Posterior cingulate gyrus (tissue), 11 donors: ENCODE measurements at regions of chr22 and their contacts with region 1.

Region 1: GRCh38 chr22:39520054-39520891 is at the start of gene ATF4:
- DNase-seq: peak; percentile 88 to 98 (median 94)

Region 2: GRCh38 chr22:39152511-39153219 is 367.6 kb before region 1 on chr22 and contains the start of gene CBX7:
- intact Hi-C with region 1: loop called (anchors 5 kb)
- DNase-seq: peak; percentile 88 to 99 (median 92)